ENCODE measurements at regions of chr15 and their contacts with region 1.

Region 1: DNA sequence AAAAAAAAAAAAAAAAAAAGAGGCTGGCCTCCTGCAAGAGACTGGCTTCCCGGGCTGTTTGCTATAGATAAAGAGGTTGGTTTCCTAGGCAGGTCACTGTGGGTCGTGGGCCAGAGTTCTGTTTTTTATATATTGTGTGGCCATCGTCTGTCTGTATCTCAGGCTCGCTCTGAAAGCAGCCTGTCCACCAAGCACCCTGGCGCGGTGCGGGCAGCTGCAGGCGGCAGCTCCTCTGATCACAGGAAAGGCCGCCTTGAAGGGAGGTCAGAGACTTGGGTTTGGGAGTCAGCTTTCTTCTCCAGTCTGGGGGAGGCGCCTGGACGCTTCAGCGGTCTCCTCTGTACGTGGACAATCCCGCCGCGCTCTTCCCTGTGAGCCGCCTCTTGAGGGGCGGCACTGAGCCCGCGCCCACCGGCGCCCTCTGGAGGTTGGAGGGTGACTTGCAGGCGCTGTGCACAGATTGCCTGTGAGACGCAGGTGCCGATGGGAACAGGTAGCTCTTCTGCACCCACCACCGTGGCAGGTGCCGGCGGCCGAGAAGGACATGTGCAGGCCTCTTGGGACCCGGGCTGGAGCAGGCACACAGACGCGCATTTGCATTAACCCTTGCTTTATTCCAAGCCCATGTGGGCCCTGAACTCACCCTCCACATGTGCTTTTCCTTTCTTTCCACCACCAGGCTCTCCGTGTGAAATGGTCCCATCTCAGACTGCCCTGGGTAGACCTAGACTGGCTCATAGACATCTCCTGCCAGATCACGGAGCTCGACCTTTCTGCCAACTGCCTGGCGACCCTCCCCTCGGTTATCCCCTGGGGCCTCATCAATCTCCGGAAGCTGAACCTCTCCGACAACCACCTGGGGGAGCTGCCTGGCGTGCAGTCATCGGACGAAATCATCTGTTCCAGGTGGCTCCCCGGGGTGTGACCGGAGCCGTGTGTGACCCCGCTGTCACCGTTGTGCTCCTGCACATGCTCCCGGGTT is 89.3 kb downstream of the LRRK1 start:
- DNase-seq: peak; percentile 62 to 89 (median 78)
- H3K4me3 ChIP-seq: peak overlapping the region in 1 of 4 donors; percentile 45
- H3K27ac ChIP-seq: peak overlapping the region in 1 of 5 donors; percentile 60
- H3K4me1 ChIP-seq: peaks cover 0 to 10% of the 10 kb centered on the region in 2 donors
- H3K27me3 ChIP-seq: peaks cover 3% of the 10 kb centered on the region
- CTCF ChIP-seq: peak; percentile 76 to 98 (median 90)
- POLR2A ChIP-seq: no peak

Region 2: DNA sequence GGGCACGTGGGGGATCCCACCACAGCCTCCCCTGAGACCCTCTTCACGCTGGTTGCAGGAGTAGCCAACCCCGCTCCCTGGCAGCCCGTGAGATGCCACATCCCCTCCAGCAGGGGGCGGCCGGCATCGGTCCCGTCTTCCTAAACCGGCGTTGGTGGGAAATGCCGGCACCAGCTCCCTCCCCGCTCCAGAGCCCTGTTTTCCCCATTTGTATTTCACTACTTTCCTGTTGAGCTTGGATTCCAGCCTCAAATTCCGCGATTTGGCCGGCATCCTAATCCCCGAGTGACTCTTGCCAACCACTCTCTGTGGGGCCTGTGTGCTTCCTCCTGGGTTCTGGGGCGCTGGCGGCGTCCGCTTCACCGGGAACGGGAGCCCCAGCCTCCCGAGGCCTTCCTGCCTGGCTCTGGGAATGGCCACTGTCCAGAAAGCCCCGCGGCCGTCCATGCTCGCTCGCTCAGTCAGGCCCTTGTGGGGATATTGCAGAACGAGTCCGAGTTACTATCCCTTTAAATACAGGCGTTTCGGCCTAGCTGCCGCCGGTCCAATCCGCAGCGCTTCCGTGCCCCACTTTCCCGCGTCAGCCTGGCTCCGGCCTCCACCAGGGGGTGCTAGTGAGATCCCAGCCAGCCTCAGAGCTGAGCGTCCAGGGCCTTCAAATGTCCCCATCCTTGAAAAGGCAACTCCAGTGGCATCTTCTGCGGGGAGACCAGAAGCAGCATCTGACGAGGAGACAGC is 658.6 kb before region 1 on chr15:
- intact Hi-C with region 1: loop called in 1 of 2 experiments (anchors 10 kb)
- DNase-seq: peak; percentile 91 to 97 (median 92)
- H3K4me3 ChIP-seq: peak overlapping the region; percentile 44 to 86 (median 70)
- H3K27ac ChIP-seq: peak overlapping the region in 4 of 5 donors; percentile 88 to 95 (median 89)
- H3K4me1 ChIP-seq: no peaks in the 10 kb centered on the region
- H3K27me3 ChIP-seq: no peaks in the 10 kb centered on the region
- CTCF ChIP-seq: peak; percentile 70 to 95 (median 84)
- POLR2A ChIP-seq: peak in 1 of 2 donors; percentile 32

Region 3: GRCh38 chr15:100627789-100628395 is 380.6 kb before region 1 on chr15:
- intact Hi-C with region 1: loop called in 1 of 2 experiments (anchors 5 kb)
- DNase-seq: peak; percentile 25 to 86 (median 63)
- H3K4me3 ChIP-seq: no peak overlapping the region
- H3K27ac ChIP-seq: no peak overlapping the region
- H3K4me1 ChIP-seq: no peaks in the 10 kb centered on the region
- H3K27me3 ChIP-seq: no peaks in the 10 kb centered on the region
- CTCF ChIP-seq: peak; percentile 72 to 87 (median 84)
- POLR2A ChIP-seq: no peak

Region 4: GRCh38 chr15:100918034-100918689 is 90.3 kb before region 1 on chr15:
- intact Hi-C with region 1: loop called (anchors 5 kb)
- DNase-seq: peak; percentile 60 to 78 (median 63)
- H3K4me3 ChIP-seq: peak overlapping the region in 2 of 4 donors; percentile 45 to 56
- H3K27ac ChIP-seq: peak overlapping the region in 2 of 5 donors; percentile 52 to 64
- H3K4me1 ChIP-seq: peaks cover 0 to 10% of the 10 kb centered on the region in 2 donors
- H3K27me3 ChIP-seq: peaks cover 15% of the 10 kb centered on the region
- CTCF ChIP-seq: peak; percentile 62 to 90 (median 78)
- POLR2A ChIP-seq: no peak